ENCODE measurements at regions of chr17 and their contacts with region 1.

Region 1: GRCh38 chr17:43760254-43760852 is 1.8 kb upstream of the SOST start:
- DNase-seq: peak; percentile 94
- ATAC-seq: peak; percentile 95
- H3K4me3 Mint-ChIP-seq: no peak overlapping the region
- H3K27ac Mint-ChIP-seq: no peak overlapping the region
- H3K4me1 Mint-ChIP-seq: peaks cover 2% of the 10 kb centered on the region
- H3K27me3 Mint-ChIP-seq: peaks cover 24% of the 10 kb centered on the region

Region 2: DNA sequence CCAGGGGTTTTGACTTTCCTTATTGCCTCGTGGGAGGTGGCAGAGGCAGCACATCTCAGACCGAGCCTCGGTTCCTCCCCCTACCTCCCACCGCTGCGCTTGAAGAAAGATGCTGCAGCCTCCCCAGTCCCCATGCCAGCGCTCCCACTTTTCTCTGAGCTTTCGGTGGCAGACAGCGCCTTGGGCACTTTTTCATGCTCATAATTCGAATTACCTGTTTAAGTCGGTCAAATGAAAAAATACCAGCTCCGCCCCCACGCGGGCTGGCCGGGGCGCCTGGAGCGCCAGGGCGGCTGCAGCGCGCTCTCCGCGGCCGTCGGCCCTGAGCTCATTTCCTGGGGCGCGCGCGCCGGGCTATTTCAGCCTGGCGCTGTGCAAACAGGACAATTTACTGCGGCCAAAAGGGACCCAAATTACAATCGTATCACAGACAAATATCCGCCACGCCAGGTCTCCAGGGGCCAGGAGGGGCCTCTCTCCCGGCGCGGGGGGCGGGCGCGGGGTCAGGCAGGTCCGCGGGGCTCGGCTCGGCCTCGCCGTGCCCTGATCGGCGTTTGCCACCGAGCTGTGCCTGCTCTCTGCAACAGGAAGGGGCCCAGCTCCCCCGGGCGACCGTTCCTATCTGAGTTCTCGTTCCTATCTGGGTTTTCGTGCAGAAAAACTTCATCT is 46.7 kb before region 1 on chr17:
- CTCF ChIA-PET with region 1: interaction called, 607 read pairs
- POLR2A ChIA-PET with region 1: no interaction called
- DNase-seq: peak; percentile 32
- ATAC-seq: peak; percentile 80
- H3K4me3 Mint-ChIP-seq: peak overlapping the region; percentile 65
- H3K27ac Mint-ChIP-seq: no peak overlapping the region
- H3K4me1 Mint-ChIP-seq: peaks cover 14% of the 10 kb centered on the region
- H3K27me3 Mint-ChIP-seq: peaks cover 46% of the 10 kb centered on the region

Region 3: DNA sequence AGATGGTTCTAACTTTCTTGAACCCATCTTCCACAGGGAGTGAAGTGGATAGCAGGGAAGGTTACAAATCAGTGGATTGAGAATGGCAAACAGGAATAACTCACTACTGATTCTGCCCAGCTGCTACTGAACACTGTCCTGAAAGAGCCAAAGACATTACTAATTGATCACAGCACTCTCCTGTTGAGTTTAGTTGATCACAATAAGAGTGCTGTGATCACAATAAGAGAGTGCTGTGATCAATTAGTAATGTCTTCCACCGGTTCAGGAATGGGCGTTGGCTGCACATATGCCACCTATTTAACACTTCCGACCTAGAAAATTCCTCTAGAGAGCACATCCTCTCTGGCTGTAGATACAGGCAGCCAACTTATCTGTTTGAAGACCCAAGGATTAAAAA is 31.2 kb after region 1 on chr17:
- CTCF ChIA-PET with region 1: no interaction called
- POLR2A ChIA-PET with region 1: no interaction called
- DNase-seq: no peak
- ATAC-seq: no peak
- H3K4me3 Mint-ChIP-seq: no peak overlapping the region
- H3K27ac Mint-ChIP-seq: no peak overlapping the region
- H3K4me1 Mint-ChIP-seq: no peaks in the 10 kb centered on the region
- H3K27me3 Mint-ChIP-seq: peaks cover 40% of the 10 kb centered on the region

Region 4: DNA sequence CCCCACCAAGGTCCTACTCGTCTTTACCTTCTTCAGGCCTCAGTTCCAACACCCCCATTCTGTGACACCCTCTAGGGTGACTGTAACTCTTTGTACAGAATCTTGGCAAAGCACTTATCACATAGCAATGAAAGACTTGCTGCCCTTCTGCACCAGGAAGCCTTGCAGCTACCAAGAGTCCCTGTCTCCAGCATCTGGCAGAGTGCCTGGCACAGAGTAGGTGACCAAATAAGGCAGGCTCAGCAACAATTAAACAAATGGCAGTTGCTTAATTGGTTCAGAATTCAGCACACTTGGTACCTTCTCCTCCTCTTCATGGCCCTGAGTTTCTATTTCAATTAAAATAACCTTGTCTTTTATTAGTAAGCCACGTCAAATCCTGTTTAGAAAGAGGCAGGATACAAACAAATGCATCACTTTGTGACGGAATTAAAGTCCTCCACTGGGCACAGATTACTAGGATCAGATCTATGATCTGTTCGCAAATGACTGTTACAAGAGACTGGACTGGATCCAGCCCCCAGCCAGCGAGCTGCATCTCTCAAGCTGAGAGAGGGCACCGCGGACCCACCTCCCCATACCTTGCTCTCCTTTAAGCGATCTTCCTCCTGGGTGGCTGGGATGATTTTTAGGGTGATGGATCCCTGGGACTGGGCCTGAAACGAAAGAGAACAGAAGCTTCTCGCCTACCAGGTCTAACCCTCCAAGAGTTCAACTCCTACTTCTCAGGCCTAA is 63.2 kb after region 1 on chr17:
- CTCF ChIA-PET with region 1: no interaction called
- POLR2A ChIA-PET with region 1: no interaction called
- DNase-seq: no peak
- ATAC-seq: no peak
- H3K4me3 Mint-ChIP-seq: no peak overlapping the region
- H3K27ac Mint-ChIP-seq: no peak overlapping the region
- H3K4me1 Mint-ChIP-seq: no peaks in the 10 kb centered on the region
- H3K27me3 Mint-ChIP-seq: no peaks in the 10 kb centered on the region

Region 5: DNA sequence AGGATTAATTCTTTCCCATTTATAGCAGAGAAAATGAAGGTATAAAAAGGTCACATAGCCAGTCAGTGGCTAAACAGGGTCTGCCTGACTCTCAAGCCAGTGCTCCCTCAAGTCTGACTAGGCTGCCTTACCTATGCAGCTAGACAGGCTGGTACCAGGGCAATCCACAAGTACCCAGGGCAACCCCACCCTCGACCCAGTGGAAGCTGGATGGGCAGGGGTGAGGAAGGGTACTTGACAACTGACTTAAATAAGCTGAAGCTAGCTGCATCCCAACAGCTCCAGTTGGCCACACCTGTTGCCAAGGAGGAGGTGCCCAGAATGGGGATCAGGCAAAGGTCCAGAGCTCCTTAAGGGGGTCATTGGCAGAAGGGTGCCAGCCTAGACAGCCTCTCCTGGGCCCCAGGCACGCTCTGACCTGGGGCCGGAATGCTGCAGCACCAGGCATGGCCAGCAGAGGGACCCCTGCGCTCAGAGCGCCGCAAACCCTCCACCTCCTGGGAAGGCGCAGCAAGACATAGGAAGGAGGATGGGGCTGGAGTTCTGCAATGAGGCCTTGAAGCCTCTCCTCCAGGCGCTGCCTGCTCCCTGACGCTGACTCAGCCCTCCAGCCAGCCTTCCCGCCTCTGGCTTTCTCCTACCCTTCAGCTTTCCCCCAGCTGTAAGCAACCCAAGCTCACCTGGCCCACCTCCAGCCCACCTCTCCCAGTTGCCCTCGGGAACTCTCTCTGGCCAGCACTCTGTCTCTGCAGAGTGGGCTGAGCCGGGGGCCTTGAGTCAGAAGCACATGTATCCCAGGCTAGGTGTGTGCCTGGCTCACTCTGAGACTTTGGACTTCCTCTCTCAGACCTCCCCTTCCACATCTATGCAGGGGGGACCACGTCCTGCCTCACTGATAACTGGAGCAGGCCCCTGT is 118.2 kb after region 1 on chr17:
- CTCF ChIA-PET with region 1: no interaction called
- POLR2A ChIA-PET with region 1: no interaction called
- DNase-seq: peak; percentile 70
- ATAC-seq: peak; percentile 83
- H3K4me3 Mint-ChIP-seq: no peak overlapping the region
- H3K27ac Mint-ChIP-seq: no peak overlapping the region
- H3K4me1 Mint-ChIP-seq: peaks cover 2% of the 10 kb centered on the region
- H3K27me3 Mint-ChIP-seq: peaks cover 2% of the 10 kb centered on the region

Region 6: DNA sequence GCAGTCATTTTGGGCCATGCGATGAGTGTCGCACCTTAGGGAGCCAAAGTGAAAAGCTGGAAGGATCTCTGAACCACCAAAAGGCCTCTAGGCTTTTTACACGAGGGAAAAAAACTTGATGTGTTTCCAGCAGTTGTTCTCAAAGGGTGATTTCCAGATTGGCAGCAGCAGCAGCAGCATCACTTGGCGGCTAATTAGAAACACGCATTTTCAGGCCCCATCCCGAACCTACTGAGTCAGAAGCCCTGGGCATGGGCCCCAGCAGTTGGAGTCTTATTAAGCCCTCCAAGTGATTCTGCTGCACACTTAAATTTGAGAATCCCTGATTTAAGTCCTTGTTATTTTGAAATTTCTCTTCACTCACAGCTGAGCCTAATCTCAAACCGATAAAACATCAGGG is 218.7 kb after region 1 on chr17:
- CTCF ChIA-PET with region 1: no interaction called
- POLR2A ChIA-PET with region 1: no interaction called
- DNase-seq: no peak
- ATAC-seq: no peak
- H3K4me3 Mint-ChIP-seq: no peak overlapping the region
- H3K27ac Mint-ChIP-seq: no peak overlapping the region
- H3K4me1 Mint-ChIP-seq: peaks cover 6% of the 10 kb centered on the region
- H3K27me3 Mint-ChIP-seq: peaks cover 38% of the 10 kb centered on the region